MCF 10A (cell line): ENCODE measurements at regions of chr5 and their contacts with region 1.

Region 1: DNA sequence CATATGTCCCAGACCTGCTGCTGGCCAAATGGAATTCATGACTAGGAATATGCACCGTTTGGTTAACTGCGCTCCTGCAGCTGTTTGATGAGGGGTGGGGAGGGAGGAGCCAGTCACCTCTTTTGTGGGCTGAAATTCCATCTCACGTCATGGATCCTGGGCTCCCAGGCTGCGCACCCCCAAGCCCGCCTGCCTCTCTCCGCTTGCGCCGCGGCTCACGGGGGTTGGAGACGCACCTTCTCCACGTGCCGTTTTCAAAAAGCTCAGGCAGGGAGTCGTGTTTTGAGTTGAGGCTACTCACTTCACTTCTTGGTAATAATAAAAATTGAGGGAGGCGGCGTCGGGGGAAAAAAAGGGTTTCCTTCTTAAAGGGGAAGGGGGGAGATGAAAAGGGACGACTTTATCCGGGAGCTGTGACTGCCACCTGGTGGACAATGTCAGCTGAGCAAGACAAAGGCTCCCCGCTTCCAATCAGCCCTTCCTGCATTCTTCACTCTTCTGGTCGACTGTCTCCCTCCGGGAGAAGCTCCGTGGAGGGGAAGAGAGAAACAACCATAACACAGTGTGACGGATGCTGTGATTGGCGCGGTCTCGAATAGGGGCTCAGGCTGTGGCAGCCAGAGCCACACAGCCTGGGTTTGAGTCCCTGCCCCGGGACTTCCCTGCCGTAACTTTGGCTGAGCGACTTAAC is 15.9 kb upstream of the C5orf47 start:
- DNase-seq: peak; percentile 87
- H3K4me3 Mint-ChIP-seq: peak overlapping the region; percentile 59
- H3K27ac Mint-ChIP-seq: peak overlapping the region; percentile 57
- H3K4me1 Mint-ChIP-seq: peaks cover 23% of the 10 kb centered on the region
- H3K27me3 Mint-ChIP-seq: peaks cover 20% of the 10 kb centered on the region
- CTCF ChIP-seq: peak; percentile 95

Region 2: GRCh38 chr5:172707285-172708182 is 1265.5 kb before region 1 on chr5:
- CTCF ChIA-PET with region 1: no interaction called
- POLR2A ChIA-PET with region 1: no interaction called
- intact Hi-C with region 1: loop called (anchors 10 kb)
- DNase-seq: peak; percentile 89
- H3K4me3 Mint-ChIP-seq: no peak overlapping the region
- H3K27ac Mint-ChIP-seq: no peak overlapping the region
- H3K4me1 Mint-ChIP-seq: peaks cover 7% of the 10 kb centered on the region
- H3K27me3 Mint-ChIP-seq: no peaks in the 10 kb centered on the region
- CTCF ChIP-seq: peak; percentile 88

Region 3: DNA sequence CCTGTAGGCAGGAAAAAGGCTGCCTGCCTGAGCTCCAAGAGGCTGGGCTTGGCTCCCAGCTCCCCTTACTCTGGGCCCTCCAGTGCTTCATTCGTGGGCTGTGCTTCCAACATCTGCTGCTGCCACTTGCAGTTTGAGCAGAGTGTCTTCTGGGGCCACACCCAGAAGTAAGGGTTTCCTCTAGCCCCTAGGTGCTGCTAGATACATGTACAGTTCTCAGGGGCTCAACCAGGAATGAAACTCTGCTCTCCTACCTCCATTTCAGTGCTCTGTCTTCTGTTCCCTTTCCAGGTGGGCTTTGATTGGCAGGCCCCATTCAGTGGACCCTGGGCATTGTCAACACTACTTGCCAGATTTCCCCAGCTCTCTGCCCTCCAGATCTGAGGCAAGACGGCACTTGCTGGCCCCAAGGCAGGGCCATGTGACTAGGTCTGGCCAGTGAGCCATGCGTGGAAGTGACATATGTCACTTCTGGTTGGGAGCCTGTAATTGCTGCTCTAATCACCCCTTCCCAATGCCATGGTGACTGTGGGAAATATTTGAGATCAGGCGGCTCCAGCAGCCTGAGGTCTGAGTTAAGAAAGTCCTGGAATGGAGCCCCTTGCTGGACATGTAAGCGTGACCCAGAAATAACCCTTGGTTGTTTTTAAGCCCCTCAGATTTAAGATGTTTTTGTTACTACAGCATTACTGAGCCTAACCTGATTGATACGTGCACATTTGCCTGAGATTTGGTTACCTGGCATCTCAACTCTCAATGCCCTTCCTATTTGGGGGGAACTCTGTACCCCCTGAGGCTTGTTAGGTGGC is 347.2 kb before region 1 on chr5:
- CTCF ChIA-PET with region 1: interaction called, 334 read pairs
- POLR2A ChIA-PET with region 1: interaction called, 64 read pairs
- intact Hi-C with region 1: no loop called
- DNase-seq: no peak
- H3K4me3 Mint-ChIP-seq: no peak overlapping the region
- H3K27ac Mint-ChIP-seq: no peak overlapping the region
- H3K4me1 Mint-ChIP-seq: peaks cover 6% of the 10 kb centered on the region
- H3K27me3 Mint-ChIP-seq: no peaks in the 10 kb centered on the region
- CTCF ChIP-seq: peak; percentile 20

Region 4: DNA sequence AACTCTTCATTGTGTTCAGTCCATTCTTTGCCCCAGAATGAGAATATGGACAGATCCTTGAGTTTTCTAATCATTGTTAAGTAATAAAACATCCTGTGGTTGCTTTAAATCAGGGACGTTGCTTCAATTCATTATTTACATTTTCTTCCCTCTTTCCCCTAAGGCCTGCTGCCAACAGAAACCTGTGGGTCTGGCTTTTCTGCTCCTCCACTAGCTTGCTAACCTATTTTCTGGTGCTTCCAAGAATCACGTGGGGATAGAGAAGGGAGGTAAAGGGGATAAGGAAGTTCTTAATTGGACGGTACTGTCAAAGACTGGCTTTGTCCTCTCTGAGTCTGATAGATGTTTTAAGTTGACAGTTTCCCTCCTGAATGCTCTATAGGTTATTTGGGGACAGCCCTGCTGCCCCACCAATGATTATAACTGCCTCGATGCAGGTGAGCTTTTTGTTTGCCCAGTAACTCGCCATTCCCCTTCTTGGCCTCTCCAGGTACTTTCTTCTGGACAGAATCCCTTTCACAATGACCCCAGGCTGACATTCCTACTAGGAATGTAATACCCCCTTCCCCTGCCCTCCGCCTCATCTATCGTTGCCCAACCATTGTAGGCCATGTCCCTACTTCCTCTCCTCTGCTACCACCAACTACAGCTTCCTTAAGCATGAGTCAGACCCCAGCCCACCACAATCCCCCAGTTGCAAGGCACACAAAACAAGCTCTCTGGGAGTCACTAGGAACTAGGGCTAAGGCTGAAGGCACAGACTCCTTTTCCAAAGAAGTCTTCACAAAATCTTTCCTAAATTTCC is 104.8 kb before region 1 on chr5:
- CTCF ChIA-PET with region 1: no interaction called
- POLR2A ChIA-PET with region 1: no interaction called
- intact Hi-C with region 1: no loop called
- DNase-seq: peak; percentile 19
- H3K4me3 Mint-ChIP-seq: no peak overlapping the region
- H3K27ac Mint-ChIP-seq: no peak overlapping the region
- H3K4me1 Mint-ChIP-seq: peaks cover 7% of the 10 kb centered on the region
- H3K27me3 Mint-ChIP-seq: no peaks in the 10 kb centered on the region
- CTCF ChIP-seq: no peak

Region 5: GRCh38 chr5:173925448-173926071 is 47.5 kb before region 1 on chr5:
- CTCF ChIA-PET with region 1: interaction called, 13 read pairs
- POLR2A ChIA-PET with region 1: no interaction called
- intact Hi-C with region 1: no loop called
- DNase-seq: peak; percentile 77
- H3K4me3 Mint-ChIP-seq: no peak overlapping the region
- H3K27ac Mint-ChIP-seq: no peak overlapping the region
- H3K4me1 Mint-ChIP-seq: peaks cover 47% of the 10 kb centered on the region
- H3K27me3 Mint-ChIP-seq: no peaks in the 10 kb centered on the region
- CTCF ChIP-seq: peak; percentile 66

Region 6: DNA sequence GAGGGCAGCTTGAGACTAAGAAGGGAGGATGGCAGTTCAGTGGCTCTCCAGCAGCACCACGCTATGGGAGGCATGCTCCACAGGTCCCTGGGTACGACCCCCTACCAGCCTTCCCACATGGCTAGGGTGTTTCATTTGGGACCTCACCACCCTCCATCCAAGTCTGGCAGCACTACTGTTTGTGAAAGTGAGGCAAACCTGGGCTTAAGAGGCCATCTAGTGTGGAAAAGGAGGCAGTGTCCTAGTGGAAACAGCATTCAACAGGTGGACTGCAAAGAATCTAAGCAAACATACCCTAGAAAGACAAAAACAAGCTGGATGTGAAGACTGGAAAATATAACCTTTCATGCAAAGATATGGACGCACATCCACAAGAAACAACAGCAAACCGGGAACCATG is 11.1 kb after region 1 on chr5:
- CTCF ChIA-PET with region 1: interaction called, 25 read pairs
- POLR2A ChIA-PET with region 1: interaction called, 3 read pairs
- intact Hi-C with region 1: no loop called
- DNase-seq: peak; percentile 44
- H3K4me3 Mint-ChIP-seq: no peak overlapping the region
- H3K27ac Mint-ChIP-seq: no peak overlapping the region
- H3K4me1 Mint-ChIP-seq: no peaks in the 10 kb centered on the region
- H3K27me3 Mint-ChIP-seq: peaks cover 19% of the 10 kb centered on the region
- CTCF ChIP-seq: peak; percentile 59